Activated CD4-positive, alpha-beta T cell treated with anti-CD3 and anti-CD28 coated beads for 36 hours (primary cell): ENCODE measurements at regions of chr2 and their contacts with region 1.

Region 1: GRCh38 chr2:210195101-210195852 is 24.1 kb upstream of the KANSL1L start:
- DNase-seq: no peak
- ATAC-seq: no peak
- H3K4me3 Mint-ChIP-seq: no peak overlapping the region
- H3K27ac Mint-ChIP-seq: no peak overlapping the region
- H3K4me1 Mint-ChIP-seq: no peaks in the 10 kb centered on the region
- H3K27me3 Mint-ChIP-seq: no peaks in the 10 kb centered on the region

Region 2: GRCh38 chr2:209423562-209424198 is 771.6 kb before region 1 on chr2 and contains the start of gene MAP2:
- CTCF ChIA-PET with region 1: no interaction called
- POLR2A ChIA-PET with region 1: no interaction called
- intact Hi-C with region 1: loop called (anchors 5 to 10 kb)
- DNase-seq: peak; percentile 87
- ATAC-seq: peak; percentile 98
- H3K4me3 Mint-ChIP-seq: peak within 1 kb of the TSS; percentile 67
- H3K27ac Mint-ChIP-seq: no peak within 1 kb of the TSS
- H3K4me1 Mint-ChIP-seq: peaks cover 10% of the 10 kb centered on the region
- H3K27me3 Mint-ChIP-seq: peaks cover 32% of the 10 kb centered on the region
- total RNA-seq, gene MAP2: 0.34 to 0.39 TPM

Region 3: GRCh38 chr2:209969692-209970091 is 225.6 kb before region 1 on chr2:
- CTCF ChIA-PET with region 1: interaction called, 10 read pairs
- POLR2A ChIA-PET with region 1: no interaction called
- intact Hi-C with region 1: no loop called
- DNase-seq: no peak
- ATAC-seq: no peak
- H3K4me3 Mint-ChIP-seq: no peak overlapping the region
- H3K27ac Mint-ChIP-seq: no peak overlapping the region
- H3K4me1 Mint-ChIP-seq: no peaks in the 10 kb centered on the region
- H3K27me3 Mint-ChIP-seq: peaks cover 9% of the 10 kb centered on the region

Region 4: GRCh38 chr2:210072922-210073509 is 122.3 kb before region 1 on chr2:
- CTCF ChIA-PET with region 1: interaction called, 7 read pairs
- POLR2A ChIA-PET with region 1: no interaction called
- intact Hi-C with region 1: loop called (anchors 1 to 2 kb)
- DNase-seq: no peak
- ATAC-seq: no peak
- H3K4me3 Mint-ChIP-seq: no peak overlapping the region
- H3K27ac Mint-ChIP-seq: no peak overlapping the region
- H3K4me1 Mint-ChIP-seq: no peaks in the 10 kb centered on the region
- H3K27me3 Mint-ChIP-seq: no peaks in the 10 kb centered on the region

Region 5: GRCh38 chr2:210593166-210593565 is 397.9 kb after region 1 on chr2:
- CTCF ChIA-PET with region 1: no interaction called
- POLR2A ChIA-PET with region 1: no interaction called
- intact Hi-C with region 1: no loop called
- DNase-seq: no peak
- ATAC-seq: no peak
- H3K4me3 Mint-ChIP-seq: no peak overlapping the region
- H3K27ac Mint-ChIP-seq: no peak overlapping the region
- H3K4me1 Mint-ChIP-seq: no peaks in the 10 kb centered on the region
- H3K27me3 Mint-ChIP-seq: no peaks in the 10 kb centered on the region